Cardiac septum (tissue), 1 donor: ENCODE measurements at regions of chr1 and their contacts with region 1.

Region 1: GRCh38 chr1:205913451-205914155 is 29.7 kb downstream of the SLC26A9 start:
- DNase-seq: no peak

Region 2: GRCh38 chr1:205812878-205813754 is 100.5 kb before region 1 on chr1 and contains the start of gene SLC41A1:
- intact Hi-C with region 1: loop called (anchors 5 kb)
- DNase-seq: peak; percentile 95
- total RNA-seq, gene SLC41A1: 238 TPM

Region 3: GRCh38 chr1:205878026-205878425 is 35.6 kb before region 1 on chr1:
- intact Hi-C with region 1: no loop called
- DNase-seq: no peak

Region 4: GRCh38 chr1:205950280-205950679 is 36.7 kb after region 1 on chr1:
- intact Hi-C with region 1: no loop called
- DNase-seq: no peak